ENCODE measurements at regions of chr9 and their contacts with region 1.

Region 1: DNA sequence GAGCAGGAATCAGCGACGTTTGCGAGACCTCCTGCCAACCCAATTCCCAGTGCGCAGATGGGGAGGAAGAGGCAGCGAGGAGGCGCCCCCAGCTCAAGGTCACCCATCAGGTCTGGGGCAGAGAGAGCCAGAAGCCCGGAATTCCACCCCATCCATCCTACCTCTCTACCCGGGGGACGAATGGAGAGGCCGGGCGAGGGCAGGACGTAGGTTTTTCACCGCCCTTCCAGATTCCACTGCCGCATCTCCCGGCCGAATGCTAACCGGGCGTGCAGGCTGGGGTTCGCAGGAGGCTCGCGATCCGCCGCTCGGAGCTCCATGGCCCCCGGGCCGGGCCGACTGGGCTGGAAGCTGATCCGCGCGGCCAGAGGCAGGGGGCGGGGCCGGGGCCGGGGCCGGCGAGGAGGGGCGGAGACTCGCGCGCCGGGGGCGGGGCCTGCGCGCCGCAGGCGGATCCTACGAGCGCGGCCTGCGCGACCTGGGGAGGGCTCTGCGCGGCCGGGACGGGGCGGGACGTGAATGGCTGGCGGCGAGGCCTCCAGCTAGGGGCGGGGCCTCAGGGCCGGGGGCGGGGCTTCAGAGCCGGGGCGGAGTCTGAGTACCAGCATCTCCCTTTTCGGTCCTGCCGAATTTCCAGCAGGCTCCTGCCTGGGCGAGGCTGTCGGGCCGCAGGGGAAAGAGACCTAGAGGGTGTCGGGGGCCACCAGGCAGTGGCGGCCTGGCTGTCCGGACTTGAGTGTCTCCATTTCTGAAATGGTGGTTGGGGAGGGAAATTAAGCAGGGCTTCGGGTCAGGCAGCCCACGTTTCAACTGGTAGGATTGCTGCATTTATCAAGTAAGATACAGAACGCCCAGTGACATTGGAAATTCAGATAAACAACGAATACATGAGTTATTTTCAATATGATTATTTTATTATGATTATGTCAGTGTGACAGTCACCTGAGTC is at the start of gene ST6GALNAC4:
- DNase-seq: peak; percentile 98
- ATAC-seq: peak; percentile 96
- H3K4me3 Mint-ChIP-seq: peak within 1 kb of the TSS; percentile 76
- H3K27ac Mint-ChIP-seq: peak within 1 kb of the TSS; percentile 69
- H3K4me1 Mint-ChIP-seq: peaks cover 47% of the 10 kb centered on the region
- H3K27me3 Mint-ChIP-seq: no peaks in the 10 kb centered on the region
- total RNA-seq, gene ST6GALNAC4: 14.9 to 20.7 TPM

Region 2: GRCh38 chr9:127503947-127504782 is 412.8 kb before region 1 on chr9:
- CTCF ChIA-PET with region 1: no interaction called
- POLR2A ChIA-PET with region 1: no interaction called
- intact Hi-C with region 1: loop called (anchors 2 to 10 kb)
- DNase-seq: peak; percentile 89
- ATAC-seq: peak; percentile 90
- H3K4me3 Mint-ChIP-seq: no peak overlapping the region
- H3K27ac Mint-ChIP-seq: no peak overlapping the region
- H3K4me1 Mint-ChIP-seq: no peaks in the 10 kb centered on the region
- H3K27me3 Mint-ChIP-seq: no peaks in the 10 kb centered on the region

Region 3: DNA sequence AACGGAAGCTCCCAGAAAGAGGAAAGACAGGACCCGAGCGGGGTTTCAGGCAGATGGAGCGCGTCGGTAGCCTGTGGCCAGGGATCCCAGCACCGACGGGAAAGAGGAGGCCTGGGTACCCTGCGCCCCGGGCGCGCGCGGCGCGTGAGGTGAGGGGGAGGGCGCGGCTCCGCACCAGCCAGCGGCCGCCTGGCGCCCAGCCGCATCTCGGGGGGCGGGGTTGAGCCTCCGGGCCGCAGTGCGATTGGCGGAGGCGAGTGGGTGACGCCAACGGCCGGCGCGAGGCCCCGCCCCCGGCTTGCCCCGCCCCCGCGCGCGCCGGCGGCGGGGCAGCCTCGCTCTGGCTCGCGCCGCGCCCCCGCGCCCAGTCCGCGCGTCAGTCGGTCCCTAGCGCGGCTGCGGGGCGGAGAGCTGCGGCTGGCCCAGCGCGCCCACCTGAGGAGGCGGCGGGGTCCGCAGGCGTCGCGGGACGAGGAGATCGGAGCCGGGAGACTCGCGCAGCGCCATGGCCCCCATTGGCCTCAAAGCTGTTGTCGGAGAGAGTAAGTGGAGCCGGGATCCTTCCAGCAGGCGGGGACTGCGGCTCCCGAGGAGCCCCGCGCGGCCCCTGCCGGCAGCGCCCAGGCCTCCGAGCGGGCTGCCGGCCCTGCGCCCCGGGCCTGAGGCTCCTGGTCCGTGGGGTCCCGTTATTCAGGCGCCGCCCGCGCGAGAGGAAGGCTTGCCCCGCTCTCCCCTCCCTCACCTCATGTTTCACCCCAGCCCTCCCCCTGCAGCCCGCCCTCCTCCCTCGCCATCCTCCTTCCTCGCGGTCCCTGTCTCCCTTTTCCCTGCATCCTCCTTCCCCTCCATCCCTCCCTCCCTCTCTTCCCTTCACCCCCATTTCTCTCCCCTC is 304.8 kb before region 1 on chr9 and contains the start of gene STXBP1:
- CTCF ChIA-PET with region 1: no interaction called
- POLR2A ChIA-PET with region 1: no interaction called
- intact Hi-C with region 1: loop called in 1 of 2 experiments (anchors 1 kb)
- DNase-seq: peak; percentile 92
- ATAC-seq: peak; percentile 87
- H3K4me3 Mint-ChIP-seq: peak within 1 kb of the TSS; percentile 85
- H3K27ac Mint-ChIP-seq: peak within 1 kb of the TSS; percentile 71
- H3K4me1 Mint-ChIP-seq: peaks cover 26% of the 10 kb centered on the region
- H3K27me3 Mint-ChIP-seq: peaks cover 32% of the 10 kb centered on the region
- total RNA-seq, gene STXBP1: 15.9 to 18.1 TPM

Region 4: DNA sequence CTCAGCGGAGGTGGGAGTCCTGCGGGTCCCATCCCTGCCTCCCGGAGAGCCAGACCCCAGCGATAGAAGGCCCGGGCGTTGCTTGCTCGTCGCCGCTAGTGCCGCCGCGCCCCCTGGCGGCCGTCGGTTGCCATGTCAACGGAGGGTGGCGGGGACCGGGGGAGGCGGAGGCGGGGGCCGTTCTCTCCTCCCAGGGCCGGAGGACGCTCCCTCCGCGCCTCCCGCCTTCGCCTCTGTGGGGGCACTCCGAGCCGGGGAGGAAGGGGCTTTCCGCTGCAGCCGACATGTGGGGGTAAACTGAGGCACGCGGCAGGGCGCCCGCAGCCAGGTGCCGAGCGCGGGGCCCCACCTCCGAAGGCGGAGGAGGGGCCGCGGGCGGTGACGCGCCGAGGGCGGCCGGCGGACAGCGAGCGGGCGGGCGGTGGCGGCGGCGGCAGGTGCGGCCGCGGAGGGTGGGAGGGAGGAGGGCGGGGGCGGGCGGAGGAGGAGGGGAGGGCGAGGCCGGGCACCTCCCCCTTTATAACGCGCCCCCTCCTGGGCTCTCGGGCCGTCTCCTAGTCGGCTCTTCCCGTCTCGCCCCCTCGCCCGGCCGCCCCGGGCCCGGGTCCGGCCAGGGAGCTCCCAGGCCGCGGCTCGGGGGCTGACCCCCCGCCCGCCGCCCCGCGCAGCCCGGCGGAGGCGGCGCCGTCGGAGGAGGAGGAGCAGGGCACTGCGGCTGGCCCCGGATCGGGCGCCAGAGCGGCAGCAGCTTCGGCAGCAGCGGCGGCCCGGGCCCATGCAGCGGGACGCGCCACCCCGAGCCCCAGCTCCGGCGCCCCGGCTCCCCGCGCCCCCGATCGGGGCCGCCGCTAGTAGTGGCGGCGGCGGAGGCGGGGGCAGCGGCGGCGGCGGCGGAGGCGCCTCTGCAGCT is 131.7 kb before region 1 on chr9:
- CTCF ChIA-PET with region 1: interaction called, 4 read pairs
- POLR2A ChIA-PET with region 1: interaction called, 5 read pairs
- intact Hi-C with region 1: loop called (anchors 1 to 5 kb)
- DNase-seq: peak; percentile 93
- ATAC-seq: peak; percentile 34
- H3K4me3 Mint-ChIP-seq: peak overlapping the region; percentile 97
- H3K27ac Mint-ChIP-seq: peak overlapping the region; percentile 97
- H3K4me1 Mint-ChIP-seq: peaks cover 74% of the 10 kb centered on the region
- H3K27me3 Mint-ChIP-seq: no peaks in the 10 kb centered on the region

Region 5: GRCh38 chr9:127877566-127877998 is 39.4 kb before region 1 on chr9 and contains the start of gene AK1:
- CTCF ChIA-PET with region 1: interaction called, 12 read pairs
- POLR2A ChIA-PET with region 1: no interaction called
- intact Hi-C with region 1: loop called in 1 of 2 experiments (anchors 5 kb)
- DNase-seq: no peak
- ATAC-seq: no peak
- H3K4me3 Mint-ChIP-seq: peak within 1 kb of the TSS; percentile 39
- H3K27ac Mint-ChIP-seq: no peak within 1 kb of the TSS
- H3K4me1 Mint-ChIP-seq: peaks cover 2% of the 10 kb centered on the region
- H3K27me3 Mint-ChIP-seq: peaks cover 8% of the 10 kb centered on the region
- total RNA-seq, gene AK1: 14.5 to 23.9 TPM

Region 6: DNA sequence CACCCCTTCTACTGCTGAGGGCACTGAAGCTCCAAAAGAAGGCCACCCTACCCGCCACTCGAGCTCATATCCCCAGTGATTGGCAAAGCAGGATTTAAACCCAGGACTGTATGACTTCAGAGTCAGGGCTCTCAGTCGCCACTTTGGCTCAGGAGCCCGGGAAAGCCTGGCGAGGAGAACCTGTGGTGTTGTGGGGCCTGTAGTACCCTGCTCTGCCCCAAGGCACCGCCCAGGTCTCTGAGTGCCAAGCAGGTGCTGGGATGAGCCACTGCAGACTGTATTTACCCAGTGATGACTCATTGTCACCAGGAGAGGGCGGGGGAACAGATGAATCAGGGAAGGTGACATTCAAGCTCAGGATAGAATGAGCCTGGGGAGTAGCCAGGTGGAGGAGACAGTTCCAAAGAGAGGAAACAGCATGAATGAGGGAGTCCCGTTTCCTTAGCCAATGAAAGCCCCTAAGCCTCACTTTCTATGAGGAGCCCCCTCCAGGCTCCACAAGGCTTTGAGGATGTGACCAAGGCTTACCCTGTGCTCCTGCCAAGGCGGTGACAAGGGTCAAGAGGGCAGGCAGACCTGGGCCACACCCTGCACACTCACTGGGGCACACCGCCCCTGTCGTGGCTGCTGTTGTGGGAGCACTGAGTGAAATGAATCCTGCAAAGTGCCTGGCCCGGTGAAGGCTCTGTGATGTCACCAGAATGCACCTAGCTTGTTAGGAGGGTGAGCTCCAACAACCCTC is 38.5 kb after region 1 on chr9:
- CTCF ChIA-PET with region 1: no interaction called
- POLR2A ChIA-PET with region 1: no interaction called
- intact Hi-C with region 1: no loop called
- DNase-seq: peak; percentile 95
- ATAC-seq: peak; percentile 91
- H3K4me3 Mint-ChIP-seq: peak overlapping the region; percentile 51
- H3K27ac Mint-ChIP-seq: peak overlapping the region; percentile 87
- H3K4me1 Mint-ChIP-seq: peaks cover 89% of the 10 kb centered on the region
- H3K27me3 Mint-ChIP-seq: no peaks in the 10 kb centered on the region

Region 7: GRCh38 chr9:128001779-128002298 is 84.9 kb after region 1 on chr9:
- CTCF ChIA-PET with region 1: no interaction called
- POLR2A ChIA-PET with region 1: no interaction called
- intact Hi-C with region 1: no loop called
- DNase-seq: no peak
- ATAC-seq: no peak
- H3K4me3 Mint-ChIP-seq: no peak overlapping the region
- H3K27ac Mint-ChIP-seq: no peak overlapping the region
- H3K4me1 Mint-ChIP-seq: peaks cover 20% of the 10 kb centered on the region
- H3K27me3 Mint-ChIP-seq: no peaks in the 10 kb centered on the region

Region 8: GRCh38 chr9:128034821-128035764 is 118.2 kb after region 1 on chr9:
- CTCF ChIA-PET with region 1: interaction called, 18 read pairs
- POLR2A ChIA-PET with region 1: no interaction called
- intact Hi-C with region 1: no loop called
- DNase-seq: peak; percentile 77
- ATAC-seq: peak; percentile 59
- H3K4me3 Mint-ChIP-seq: no peak overlapping the region
- H3K27ac Mint-ChIP-seq: peak overlapping the region; percentile 59
- H3K4me1 Mint-ChIP-seq: peaks cover 40% of the 10 kb centered on the region
- H3K27me3 Mint-ChIP-seq: peaks cover 2% of the 10 kb centered on the region

Region 9: GRCh38 chr9:128523199-128523925 is 606.4 kb after region 1 on chr9:
- CTCF ChIA-PET with region 1: no interaction called
- POLR2A ChIA-PET with region 1: no interaction called
- intact Hi-C with region 1: no loop called
- DNase-seq: no peak
- ATAC-seq: no peak
- H3K4me3 Mint-ChIP-seq: no peak overlapping the region
- H3K27ac Mint-ChIP-seq: no peak overlapping the region
- H3K4me1 Mint-ChIP-seq: no peaks in the 10 kb centered on the region
- H3K27me3 Mint-ChIP-seq: no peaks in the 10 kb centered on the region

Measured in activated CD4-positive, alpha-beta T cell treated with anti-CD3 and anti-CD28 coated beads for 36 hours (primary cell).